ENCODE measurements at regions of chr3 and their contacts with region 1.

Region 1: GRCh38 chr3:159884661-159885402 is 103.8 kb upstream of the IL12A start:
- DNase-seq: no peak
- H3K4me3 ChIP-seq: no peak overlapping the region
- H3K27ac ChIP-seq: no peak overlapping the region
- H3K27me3 ChIP-seq: no peaks in the 10 kb centered on the region
- CTCF ChIP-seq: peak; percentile 58

Region 2: DNA sequence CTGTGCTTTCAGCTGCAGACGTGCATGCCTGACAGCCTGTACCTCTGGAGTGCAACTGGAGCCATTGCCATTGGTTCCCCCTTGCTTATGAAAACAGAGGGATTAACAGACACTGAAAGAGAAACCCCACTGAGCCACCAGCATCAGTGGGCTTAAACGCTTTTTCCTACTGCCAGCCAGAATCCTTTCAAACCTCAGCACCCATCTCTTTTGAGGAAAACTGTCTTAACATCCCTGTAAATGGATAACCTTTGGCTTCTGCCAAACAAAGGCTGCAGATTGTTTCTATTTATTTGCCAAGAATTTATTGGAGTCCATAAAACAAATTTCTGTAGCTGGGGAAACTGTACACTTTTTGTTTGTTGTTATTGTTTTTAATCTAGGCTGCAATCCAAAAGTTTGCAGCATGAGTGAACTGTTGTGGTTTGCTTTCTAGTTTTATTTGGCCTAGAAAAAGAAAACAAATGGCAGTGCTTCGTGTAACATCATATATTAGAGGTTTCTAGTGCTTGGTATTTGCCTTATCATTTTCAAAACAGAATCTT is 265.4 kb before region 1 on chr3:
- CTCF ChIA-PET with region 1: no interaction called
- POLR2A ChIA-PET with region 1: no interaction called
- DNase-seq: no peak
- H3K4me3 ChIP-seq: no peak overlapping the region
- H3K27ac ChIP-seq: no peak overlapping the region
- H3K27me3 ChIP-seq: no peaks in the 10 kb centered on the region
- CTCF ChIP-seq: no peak

Region 3: DNA sequence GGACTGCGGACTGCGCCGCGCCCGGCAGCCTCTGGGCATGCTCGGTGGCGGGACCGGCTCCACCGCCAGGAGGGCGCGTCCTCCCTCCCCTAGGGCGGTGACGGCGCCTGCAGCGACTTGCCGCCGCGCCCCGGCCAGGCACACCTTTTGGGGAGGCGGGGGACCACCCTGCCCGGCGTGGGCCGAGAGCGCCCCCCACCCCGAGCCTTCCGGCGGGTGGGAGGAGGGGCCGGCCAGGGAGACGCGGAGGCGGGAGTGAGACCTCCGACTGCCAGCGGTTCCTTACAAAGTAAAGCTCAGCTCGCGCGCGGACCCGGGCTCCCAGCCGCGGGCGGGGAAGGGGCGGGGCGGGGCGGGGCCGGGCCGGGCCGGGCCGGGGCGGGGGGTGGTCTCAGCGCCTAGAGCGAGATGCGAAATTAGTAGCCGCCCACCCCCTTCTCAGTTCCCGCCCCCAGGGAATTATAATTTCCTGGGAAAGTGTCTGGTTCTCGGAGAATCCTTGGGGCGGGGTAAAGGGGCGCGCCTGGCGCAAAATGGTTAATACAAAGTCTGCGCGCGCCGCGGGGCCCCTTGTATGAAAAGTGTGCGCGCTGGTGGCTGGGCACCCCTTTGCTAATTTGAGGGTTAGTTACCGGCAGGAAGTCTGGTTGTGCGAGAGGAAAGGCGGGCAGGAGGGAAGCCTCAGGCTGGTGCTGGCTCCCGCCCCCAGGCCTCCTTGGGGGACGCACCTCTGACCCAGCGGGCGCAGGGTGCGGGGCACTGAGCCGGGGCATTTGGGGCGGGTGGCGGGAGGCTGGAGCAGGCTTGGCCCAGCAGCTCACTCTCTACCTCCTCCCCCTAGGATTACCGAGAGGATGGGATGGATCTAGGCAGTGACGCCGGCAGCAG is 121.0 kb before region 1 on chr3:
- CTCF ChIA-PET with region 1: no interaction called
- POLR2A ChIA-PET with region 1: no interaction called
- DNase-seq: peak; percentile 54
- H3K4me3 ChIP-seq: peak overlapping the region; percentile 75
- H3K27ac ChIP-seq: peak overlapping the region; percentile 95
- H3K27me3 ChIP-seq: no peaks in the 10 kb centered on the region
- CTCF ChIP-seq: peak; percentile 25

Region 4: GRCh38 chr3:159813822-159814523 is 70.9 kb before region 1 on chr3:
- CTCF ChIA-PET with region 1: interaction called, 13 read pairs
- POLR2A ChIA-PET with region 1: no interaction called
- DNase-seq: no peak
- H3K4me3 ChIP-seq: no peak overlapping the region
- H3K27ac ChIP-seq: peak overlapping the region; percentile 22
- H3K27me3 ChIP-seq: no peaks in the 10 kb centered on the region
- CTCF ChIP-seq: no peak

Region 5: DNA sequence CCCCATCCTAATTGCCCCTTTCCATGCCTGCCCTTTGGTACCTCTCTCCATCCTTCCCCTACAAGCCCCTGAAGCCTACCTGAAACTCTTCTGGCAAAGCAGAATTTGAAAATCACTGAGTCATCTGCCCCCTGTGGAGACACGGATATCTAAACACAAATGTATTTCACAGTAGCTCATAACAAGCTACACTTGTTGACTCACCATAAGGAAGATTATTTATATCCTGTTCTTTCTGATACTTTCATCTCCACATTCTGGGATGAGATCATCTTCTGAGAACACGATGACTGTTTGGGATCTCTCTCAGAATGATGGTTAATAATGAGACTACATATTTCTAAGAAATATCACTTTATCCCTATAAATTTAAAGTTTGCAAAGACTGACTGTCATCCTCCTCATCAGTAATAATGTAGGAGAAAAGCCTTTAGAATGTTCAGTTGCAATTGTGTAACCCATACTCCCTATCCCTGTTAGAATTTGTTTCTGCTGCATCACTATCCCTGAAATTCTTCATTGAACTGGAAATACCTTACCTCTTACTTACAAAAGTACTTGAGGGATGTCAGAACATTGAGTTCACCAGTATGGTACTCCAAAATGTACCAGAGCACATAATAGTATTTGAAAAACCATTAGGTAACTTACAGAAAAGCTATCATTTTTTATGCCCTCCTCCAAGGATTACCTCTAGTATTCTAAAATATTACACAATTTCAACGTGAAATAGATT is 12.3 kb before region 1 on chr3:
- CTCF ChIA-PET with region 1: interaction called, 34 read pairs
- POLR2A ChIA-PET with region 1: interaction called, 3 read pairs
- DNase-seq: peak; percentile 74
- H3K4me3 ChIP-seq: no peak overlapping the region
- H3K27ac ChIP-seq: peak overlapping the region; percentile 71
- H3K27me3 ChIP-seq: no peaks in the 10 kb centered on the region
- CTCF ChIP-seq: peak; percentile 44

Region 6: DNA sequence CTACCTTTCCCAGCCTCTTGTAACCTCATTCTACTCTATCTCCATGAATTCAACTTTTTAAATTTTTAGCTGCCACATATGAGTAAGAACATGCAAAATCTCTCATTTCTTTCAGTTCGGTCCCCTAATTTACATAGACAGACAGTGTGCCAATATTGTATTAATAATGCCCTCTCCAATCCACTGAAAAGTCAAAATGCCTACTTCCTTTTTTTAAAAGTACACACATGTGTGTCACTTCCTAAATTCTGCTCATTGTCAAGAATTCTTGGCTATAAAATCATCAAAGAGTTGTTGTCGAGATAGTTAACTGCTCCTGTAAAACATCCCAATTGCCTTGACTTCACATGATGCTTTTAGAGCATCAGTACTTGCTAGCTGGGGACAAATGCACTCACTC is 19.6 kb after region 1 on chr3:
- CTCF ChIA-PET with region 1: interaction called, 71 read pairs
- POLR2A ChIA-PET with region 1: no interaction called
- DNase-seq: no peak
- H3K4me3 ChIP-seq: no peak overlapping the region
- H3K27ac ChIP-seq: no peak overlapping the region
- H3K27me3 ChIP-seq: no peaks in the 10 kb centered on the region
- CTCF ChIP-seq: no peak

Region 7: GRCh38 chr3:159964166-159964973 is 79.5 kb after region 1 on chr3:
- CTCF ChIA-PET with region 1: interaction called, 14 read pairs
- POLR2A ChIA-PET with region 1: no interaction called
- DNase-seq: peak; percentile 49
- H3K4me3 ChIP-seq: no peak overlapping the region
- H3K27ac ChIP-seq: peak overlapping the region; percentile 75
- H3K27me3 ChIP-seq: no peaks in the 10 kb centered on the region
- CTCF ChIP-seq: no peak

Region 8: DNA sequence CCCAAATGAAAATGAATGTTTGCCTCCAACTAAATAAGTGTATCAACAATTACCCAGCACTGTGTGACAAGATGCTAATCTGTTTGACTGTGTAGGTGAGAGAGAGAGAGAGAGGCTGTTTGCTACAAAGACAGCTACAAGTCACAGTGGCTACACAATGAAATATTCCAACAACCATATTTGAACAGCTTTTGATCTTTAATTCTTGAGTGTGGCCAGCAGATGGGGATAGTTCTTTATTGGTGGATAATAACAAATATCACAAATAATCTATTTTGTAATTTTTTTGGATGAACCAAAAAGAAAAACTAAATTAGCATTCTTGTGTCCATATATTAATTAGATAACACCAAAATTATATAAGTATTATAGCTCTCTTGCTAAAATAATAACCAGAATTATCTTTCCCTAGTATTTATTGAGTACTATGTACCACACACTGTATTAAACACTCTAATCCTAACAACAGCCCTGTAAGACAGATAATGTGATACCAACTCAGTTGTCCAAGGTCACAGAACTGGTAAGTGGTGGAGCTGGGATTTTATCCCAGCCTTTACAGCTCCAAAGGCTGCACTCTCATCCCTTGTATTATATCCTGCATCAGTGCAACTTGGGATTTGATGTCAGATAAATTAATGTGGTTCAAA is 278.5 kb after region 1 on chr3:
- CTCF ChIA-PET with region 1: interaction called, 14 read pairs
- POLR2A ChIA-PET with region 1: no interaction called
- DNase-seq: peak; percentile 15
- H3K4me3 ChIP-seq: no peak overlapping the region
- H3K27ac ChIP-seq: no peak overlapping the region
- H3K27me3 ChIP-seq: no peaks in the 10 kb centered on the region
- CTCF ChIP-seq: peak; percentile 56

Region 9: DNA sequence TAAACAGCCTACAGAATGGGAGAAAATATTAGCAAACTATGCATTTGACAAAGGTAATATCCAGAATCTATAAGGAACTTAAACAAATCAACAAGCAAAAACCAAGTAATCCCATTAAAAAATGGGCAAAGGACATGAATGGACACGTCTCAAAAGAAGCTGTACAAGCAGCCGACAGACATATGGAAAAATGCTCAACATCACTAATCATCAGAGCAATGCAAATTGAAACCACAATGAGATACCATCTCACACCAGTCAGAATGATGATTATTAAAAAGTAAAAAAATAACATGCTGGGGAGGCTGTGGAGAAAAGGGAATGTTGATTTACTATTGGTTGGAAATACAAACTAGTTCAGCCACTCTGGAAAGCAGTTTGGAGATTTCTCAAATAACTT is 840.5 kb after region 1 on chr3:
- CTCF ChIA-PET with region 1: no interaction called
- POLR2A ChIA-PET with region 1: no interaction called
- DNase-seq: no peak
- H3K4me3 ChIP-seq: no peak overlapping the region
- H3K27ac ChIP-seq: no peak overlapping the region
- H3K27me3 ChIP-seq: no peaks in the 10 kb centered on the region
- CTCF ChIP-seq: no peak